K562 (cell line): ENCODE measurements at regions of chr16 and their contacts with region 1.

Region 1: GRCh38 chr16:29973384-29974246 is at the start of gene TAOK2:
- DNase-seq: peak; percentile 99 to 100 (median 99)
- ATAC-seq: peak; percentile 99
- H3K4me3 ChIP-seq: peak within 1 kb of the TSS; percentile 71
- H3K27ac ChIP-seq: peak within 1 kb of the TSS; percentile 80
- H3K4me1 ChIP-seq: peaks cover 26 to 30% of the 10 kb centered on the region in 2 experiments; a peak in 4 of 5 replicates
- H3K27me3 ChIP-seq: no peaks in the 10 kb centered on the region
- CTCF ChIP-seq: no peak; a peak in 1 of 6 replicates
- EP300 ChIP-seq: no peak
- POLR2A ChIP-seq: peak; percentile 94
- RAD21 ChIP-seq: 0 out of 4 replicates have a peak, but pooled peaks of 1 of the 2 experiments have one; percentile 3
- polyA plus RNA-seq, gene TAOK2: 0.10 to 0.11 TPM

Region 2: DNA sequence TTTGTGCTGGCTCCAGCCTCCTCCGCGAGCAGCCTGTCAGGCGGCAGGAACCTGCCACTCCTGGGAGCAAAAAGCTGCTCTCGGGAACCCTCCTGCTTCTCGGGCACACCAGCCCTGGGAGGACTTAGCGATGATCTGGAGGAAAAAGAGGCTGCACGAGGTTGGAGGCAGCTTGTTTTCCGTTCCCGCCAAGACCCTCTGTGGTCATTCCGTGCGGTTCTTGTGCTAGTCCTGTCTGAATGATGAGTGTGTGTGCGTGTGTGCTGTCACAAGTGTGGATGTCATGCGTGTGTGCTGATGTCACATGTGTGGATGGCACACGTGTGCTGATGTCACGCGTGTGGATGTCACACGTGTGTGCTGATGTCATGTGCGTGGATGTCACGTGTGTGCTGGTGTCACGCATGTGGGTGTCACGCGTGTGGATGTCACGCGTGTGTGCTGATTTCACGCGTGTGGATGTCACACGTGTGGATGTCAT is 717.1 kb before region 1 on chr16:
- CTCF ChIA-PET with region 1: no interaction called
- POLR2A ChIA-PET with region 1: no interaction called
- in situ Hi-C with region 1: no loop called
- intact Hi-C with region 1: no loop called
- DNase-seq: no peak
- ATAC-seq: no peak
- H3K4me3 ChIP-seq: no peak overlapping the region
- H3K27ac ChIP-seq: no peak overlapping the region
- H3K4me1 ChIP-seq: peaks cover 6 to 45% of the 10 kb centered on the region in 2 experiments; a peak in 4 of 5 replicates
- H3K27me3 ChIP-seq: peaks cover 2 to 17% of the 10 kb centered on the region in 2 experiments; a peak in 4 of 5 replicates
- CTCF ChIP-seq: no peak
- EP300 ChIP-seq: no peak
- POLR2A ChIP-seq: no peak
- RAD21 ChIP-seq: no peak

Region 3: GRCh38 chr16:29302976-29303375 is 670.6 kb before region 1 on chr16:
- CTCF ChIA-PET with region 1: no interaction called
- POLR2A ChIA-PET with region 1: no interaction called
- in situ Hi-C with region 1: no loop called
- intact Hi-C with region 1: no loop called
- DNase-seq: no peak
- ATAC-seq: no peak
- H3K4me3 ChIP-seq: no peak overlapping the region
- H3K27ac ChIP-seq: no peak overlapping the region
- H3K4me1 ChIP-seq: peaks cover 7 to 12% of the 10 kb centered on the region in 2 experiments; a peak in 4 of 5 replicates
- H3K27me3 ChIP-seq: peaks cover 0 to 19% of the 10 kb centered on the region in 2 experiments; a peak in 2 of 5 replicates
- CTCF ChIP-seq: no peak
- EP300 ChIP-seq: no peak
- POLR2A ChIP-seq: no peak
- RAD21 ChIP-seq: no peak

Region 4: GRCh38 chr16:29943846-29944669 is 29.6 kb before region 1 on chr16:
- CTCF ChIA-PET with region 1: no interaction called
- POLR2A ChIA-PET with region 1: interaction called, 9 read pairs
- in situ Hi-C with region 1: no loop called
- intact Hi-C with region 1: loop called (anchors 1 kb)
- DNase-seq: peak; percentile 62 to 83 (median 75)
- ATAC-seq: peak; percentile 89
- H3K4me3 ChIP-seq: peak overlapping the region; percentile 7; the same call in 1 of the 2 replicates
- H3K27ac ChIP-seq: peak overlapping the region; percentile 86
- H3K4me1 ChIP-seq: peaks cover 18 to 36% of the 10 kb centered on the region in 2 experiments
- H3K27me3 ChIP-seq: no peaks in the 10 kb centered on the region
- CTCF ChIP-seq: peak; percentile 59 to 73 (median 71)
- EP300 ChIP-seq: no peak
- POLR2A ChIP-seq: no peak
- RAD21 ChIP-seq: no peak

Region 5: GRCh38 chr16:29961479-29962343 is 11.9 kb before region 1 on chr16 and contains the start of gene TMEM219:
- CTCF ChIA-PET with region 1: no interaction called
- POLR2A ChIA-PET with region 1: interaction called, 18 read pairs
- in situ Hi-C with region 1: no loop called
- intact Hi-C with region 1: no loop called
- DNase-seq: peak; percentile 94 to 99 (median 98)
- ATAC-seq: peak; percentile 98
- H3K4me3 ChIP-seq: peak within 1 kb of the TSS; percentile 69
- H3K27ac ChIP-seq: peak within 1 kb of the TSS; percentile 85
- H3K4me1 ChIP-seq: peaks cover 12 to 20% of the 10 kb centered on the region in 2 experiments; a peak in 4 of 5 replicates
- H3K27me3 ChIP-seq: no peaks in the 10 kb centered on the region
- CTCF ChIP-seq: peak; percentile 16 to 39 (median 33); a peak in 4 of 6 replicates
- EP300 ChIP-seq: no peak
- POLR2A ChIP-seq: peak; percentile 78
- RAD21 ChIP-seq: peak in 1 of 2 experiments; percentile 20; a peak in 2 of 4 replicates
- polyA plus RNA-seq, gene TMEM219: 49.4 to 57.1 TPM

Region 6: DNA sequence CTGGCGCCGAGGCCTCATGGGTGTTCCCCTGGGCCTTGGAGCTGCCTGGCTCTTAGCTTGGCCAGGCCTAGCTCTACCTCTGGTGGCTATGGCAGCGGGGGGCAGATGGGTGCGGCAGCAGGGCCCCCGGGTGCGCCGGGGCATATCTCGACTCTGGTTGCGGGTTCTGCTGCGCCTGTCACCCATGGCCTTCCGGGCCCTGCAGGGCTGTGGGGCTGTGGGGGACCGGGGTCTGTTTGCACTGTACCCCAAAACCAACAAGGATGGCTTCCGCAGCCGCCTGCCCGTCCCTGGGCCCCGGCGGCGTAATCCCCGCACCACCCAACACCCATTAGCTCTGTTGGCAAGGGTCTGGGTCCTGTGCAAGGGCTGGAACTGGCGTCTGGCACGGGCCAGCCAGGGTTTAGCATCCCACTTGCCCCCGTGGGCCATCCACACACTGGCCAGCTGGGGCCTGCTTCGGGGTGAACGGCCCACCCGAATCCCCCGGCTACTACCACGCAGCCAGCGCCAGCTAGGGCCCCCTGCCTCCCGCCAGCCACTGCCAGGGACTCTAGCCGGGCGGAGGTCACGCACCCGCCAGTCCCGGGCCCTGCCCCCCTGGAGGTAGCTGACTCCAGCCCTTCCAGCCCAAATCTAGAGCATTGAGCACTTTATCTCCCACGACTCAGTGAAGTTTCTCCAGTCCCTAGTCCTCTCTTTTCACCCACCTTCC is 13.9 kb after region 1 on chr16:
- CTCF ChIA-PET with region 1: no interaction called
- POLR2A ChIA-PET with region 1: interaction called, 22 read pairs
- in situ Hi-C with region 1: no loop called
- intact Hi-C with region 1: no loop called
- DNase-seq: no peak
- ATAC-seq: no peak
- H3K4me3 ChIP-seq: no peak overlapping the region
- H3K27ac ChIP-seq: no peak overlapping the region
- H3K4me1 ChIP-seq: peaks cover 3 to 23% of the 10 kb centered on the region in 2 experiments; a peak in 3 of 5 replicates
- H3K27me3 ChIP-seq: no peaks in the 10 kb centered on the region
- CTCF ChIP-seq: no peak
- EP300 ChIP-seq: no peak
- POLR2A ChIP-seq: no peak
- RAD21 ChIP-seq: no peak

Region 7: GRCh38 chr16:29995911-29996772 is 22.5 kb after region 1 on chr16 and contains the start of gene INO80E:
- CTCF ChIA-PET with region 1: no interaction called
- POLR2A ChIA-PET with region 1: interaction called, 20 read pairs
- in situ Hi-C with region 1: no loop called
- intact Hi-C with region 1: no loop called
- DNase-seq: peak; percentile 95 to 98 (median 97)
- ATAC-seq: peak; percentile 97
- H3K4me3 ChIP-seq: peak within 1 kb of the TSS; percentile 80
- H3K27ac ChIP-seq: peak within 1 kb of the TSS; percentile 100
- H3K4me1 ChIP-seq: peaks cover 16 to 54% of the 10 kb centered on the region in 2 experiments; a peak in 4 of 5 replicates
- H3K27me3 ChIP-seq: no peaks in the 10 kb centered on the region
- CTCF ChIP-seq: no peak
- EP300 ChIP-seq: no peak
- POLR2A ChIP-seq: peak; percentile 93
- RAD21 ChIP-seq: no peak
- polyA plus RNA-seq, gene INO80E: 0.31 to 0.56 TPM